Psoas muscle (tissue), 8 donors: ENCODE measurements at regions of chr5 and their contacts with region 1.

Region 1: GRCh38 chr5:132007399-132008165 is 3.9 kb downstream of the ACSL6 start:
- DNase-seq: peak; percentile 62 to 78
- ATAC-seq: peak; percentile 77 to 83 (median 82)
- H3K4me3 ChIP-seq: no peak overlapping the region
- H3K27ac ChIP-seq: no peak overlapping the region
- H3K4me1 ChIP-seq: peaks cover 30% of the 10 kb centered on the region
- H3K27me3 ChIP-seq: no peaks in the 10 kb centered on the region
- CTCF ChIP-seq: peak; percentile 83

Region 2: GRCh38 chr5:131589510-131590348 is 417.9 kb before region 1 on chr5:
- intact Hi-C with region 1: loop called (anchors 2 kb)
- DNase-seq: no peak
- ATAC-seq: peak; percentile 57 to 88 (median 71)
- H3K4me3 ChIP-seq: no peak overlapping the region
- H3K27ac ChIP-seq: no peak overlapping the region
- H3K4me1 ChIP-seq: peaks cover 9% of the 10 kb centered on the region
- H3K27me3 ChIP-seq: no peaks in the 10 kb centered on the region
- CTCF ChIP-seq: peak; percentile 80

Region 3: DNA sequence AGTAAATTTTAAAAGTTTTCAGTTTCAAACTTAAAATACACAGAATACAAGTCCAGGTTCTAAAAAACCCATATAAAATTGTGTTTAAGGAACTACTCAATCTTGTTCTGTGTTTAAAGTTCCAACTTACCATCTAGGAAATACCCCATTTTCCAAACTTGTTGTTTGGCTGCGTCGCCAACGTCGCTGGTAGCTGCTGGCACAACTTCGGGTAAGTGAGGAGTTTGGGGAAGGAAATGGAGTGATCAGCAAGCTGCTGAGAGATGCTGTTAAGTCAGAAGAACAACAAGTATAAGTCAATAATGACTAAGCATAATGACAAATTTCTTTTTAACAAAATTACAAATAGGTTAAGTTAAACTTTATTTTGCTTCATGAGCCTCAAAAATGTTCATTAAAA is 301.3 kb before region 1 on chr5:
- intact Hi-C with region 1: loop called in 1 of 2 experiments (anchors 10 kb)
- DNase-seq: no peak
- ATAC-seq: no peak
- H3K4me3 ChIP-seq: no peak overlapping the region
- H3K27ac ChIP-seq: peak overlapping the region; percentile 37
- H3K4me1 ChIP-seq: peaks cover 27% of the 10 kb centered on the region
- H3K27me3 ChIP-seq: no peaks in the 10 kb centered on the region
- CTCF ChIP-seq: no peak

Region 4: GRCh38 chr5:131810510-131811249 is 196.9 kb before region 1 on chr5:
- intact Hi-C with region 1: loop called (anchors 1 to 5 kb)
- DNase-seq: no peak
- ATAC-seq: peak; percentile 79 to 94 (median 84)
- H3K4me3 ChIP-seq: peak overlapping the region; percentile 12
- H3K27ac ChIP-seq: peak overlapping the region; percentile 53
- H3K4me1 ChIP-seq: peaks cover 31% of the 10 kb centered on the region
- H3K27me3 ChIP-seq: no peaks in the 10 kb centered on the region
- CTCF ChIP-seq: peak; percentile 43